ENCODE measurements at regions of chr2 and their contacts with region 1.

Region 1: DNA sequence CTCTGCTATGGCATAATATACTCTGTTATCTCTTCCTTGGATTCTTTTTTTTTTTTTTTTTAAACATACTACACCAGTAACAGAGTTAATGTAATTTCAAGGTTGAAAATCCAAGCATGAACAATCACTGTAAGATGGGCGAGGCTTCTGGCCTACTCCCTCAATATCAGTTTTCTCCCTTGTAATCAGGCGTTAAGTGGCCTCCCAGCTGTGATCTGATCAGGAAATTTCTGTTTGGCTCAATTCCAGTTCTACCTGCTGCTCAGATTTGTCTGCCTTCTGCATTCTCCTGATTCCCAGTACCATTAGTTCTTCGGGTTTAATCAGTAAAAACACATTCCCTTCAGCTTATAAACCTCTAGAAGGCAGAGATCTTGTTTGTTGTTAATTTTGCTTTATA is 18.6 kb downstream of the PRKD3 start:
- DNase-seq: peak; percentile 4
- H3K4me3 Mint-ChIP-seq: no peak overlapping the region
- H3K27ac Mint-ChIP-seq: no peak overlapping the region
- H3K4me1 Mint-ChIP-seq: peaks cover 5% of the 10 kb centered on the region
- H3K27me3 Mint-ChIP-seq: no peaks in the 10 kb centered on the region
- CTCF ChIP-seq: no peak

Region 2: DNA sequence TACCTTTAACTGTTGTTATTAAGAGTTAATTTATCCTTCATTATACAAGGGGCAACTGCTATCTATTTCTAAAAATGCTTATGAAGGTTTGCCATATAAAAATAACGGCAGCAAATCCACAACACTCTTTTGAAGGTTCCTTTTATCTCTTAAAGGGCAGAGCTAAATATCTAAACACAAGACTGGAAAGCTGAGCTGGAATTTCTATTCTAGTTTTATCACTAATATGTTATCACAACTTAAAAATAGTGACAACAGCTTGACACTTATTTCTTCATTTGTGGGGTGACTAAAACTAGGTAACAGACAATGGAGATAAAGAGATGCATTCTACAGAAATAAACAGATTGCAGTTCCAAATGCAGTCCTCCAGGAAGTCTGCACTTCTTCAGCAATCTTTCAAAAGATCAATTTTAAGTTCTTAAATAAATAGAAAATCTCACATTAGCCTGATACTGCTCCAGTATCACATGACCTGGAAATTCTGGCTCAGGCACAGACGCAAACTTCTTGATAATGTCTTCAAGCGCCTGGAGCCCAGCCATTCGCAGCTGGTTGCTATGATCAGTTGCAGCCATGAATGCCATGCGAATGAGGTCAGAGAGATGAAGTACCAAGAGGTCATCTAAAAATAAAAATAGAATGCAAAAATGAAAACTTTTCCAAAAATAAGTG is 285.7 kb before region 1 on chr2:
- CTCF ChIA-PET with region 1: no interaction called
- intact Hi-C with region 1: no loop called
- DNase-seq: no peak
- H3K4me3 Mint-ChIP-seq: no peak overlapping the region
- H3K27ac Mint-ChIP-seq: no peak overlapping the region
- H3K4me1 Mint-ChIP-seq: no peaks in the 10 kb centered on the region
- H3K27me3 Mint-ChIP-seq: no peaks in the 10 kb centered on the region
- CTCF ChIP-seq: no peak

Region 3: DNA sequence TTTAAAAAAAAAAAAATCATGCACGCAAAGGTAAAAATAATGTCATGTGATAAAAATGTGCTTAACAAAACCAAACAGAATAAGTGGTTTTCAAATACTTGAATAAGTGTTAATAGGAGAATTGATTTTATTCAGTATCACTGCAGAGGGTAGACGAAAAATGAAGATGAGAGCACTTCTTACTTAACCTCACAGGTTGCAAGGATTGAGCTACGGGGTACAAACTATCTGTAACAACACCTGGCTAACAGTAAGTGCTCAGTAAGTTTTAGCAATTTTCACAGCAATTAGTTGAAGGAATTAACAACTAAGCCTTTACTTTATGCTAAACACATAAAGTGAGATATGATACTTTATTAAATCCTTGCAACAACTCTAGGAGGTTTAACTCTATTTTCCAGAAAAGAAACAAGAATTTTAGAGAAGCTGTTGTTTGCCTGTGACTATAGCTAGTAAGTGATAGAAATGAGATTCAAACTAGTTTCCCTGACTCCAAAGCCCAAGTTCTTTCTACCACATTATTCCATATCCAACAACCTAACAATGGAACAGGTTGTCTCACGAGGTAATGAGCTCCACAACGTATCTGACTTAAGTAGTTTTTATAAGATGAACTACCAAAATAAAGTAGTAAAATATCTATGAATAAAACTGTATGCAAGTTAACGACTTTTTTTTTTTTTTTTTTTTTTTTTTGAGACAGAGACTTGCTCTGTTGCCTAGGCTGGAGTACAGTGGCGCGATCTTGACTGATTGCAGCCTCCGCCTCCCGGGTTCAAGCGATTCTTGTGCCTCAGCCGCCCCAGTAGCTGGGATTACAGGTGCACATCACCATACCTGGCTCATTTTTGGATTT is 14.0 kb after region 1 on chr2:
- CTCF ChIA-PET with region 1: no interaction called
- intact Hi-C with region 1: loop called (anchors 1 kb)
- DNase-seq: no peak
- H3K4me3 Mint-ChIP-seq: no peak overlapping the region
- H3K27ac Mint-ChIP-seq: no peak overlapping the region
- H3K4me1 Mint-ChIP-seq: peaks cover 25% of the 10 kb centered on the region
- H3K27me3 Mint-ChIP-seq: no peaks in the 10 kb centered on the region
- CTCF ChIP-seq: no peak

Region 4: GRCh38 chr2:37357530-37357929 is 51.5 kb after region 1 on chr2:
- CTCF ChIA-PET with region 1: no interaction called
- intact Hi-C with region 1: loop called (anchors 5 kb)
- DNase-seq: no peak
- H3K4me3 Mint-ChIP-seq: no peak overlapping the region
- H3K27ac Mint-ChIP-seq: no peak overlapping the region
- H3K4me1 Mint-ChIP-seq: no peaks in the 10 kb centered on the region
- H3K27me3 Mint-ChIP-seq: no peaks in the 10 kb centered on the region
- CTCF ChIP-seq: no peak

Measured in Calu3 (cell line).